Ovary (tissue), 10 donors: ENCODE measurements at regions of chr6 and their contacts with region 1.

Region 1: GRCh38 chr6:17656092-17656491 is 50.6 kb downstream of the NUP153 start:
- DNase-seq: no peak
- H3K4me3 ChIP-seq: no peak overlapping the region
- H3K27ac ChIP-seq: no peak overlapping the region
- H3K4me1 ChIP-seq: no peaks in the 10 kb centered on the region
- H3K27me3 ChIP-seq: no peaks in the 10 kb centered on the region
- CTCF ChIP-seq: no peak
- EP300 ChIP-seq: no peak
- POLR2A ChIP-seq: no peak

Region 2: GRCh38 chr6:17640477-17640917 is 15.6 kb before region 1 on chr6:
- intact Hi-C with region 1: loop called in 1 of 4 experiments (anchors 1 kb)
- DNase-seq: no peak
- H3K4me3 ChIP-seq: no peak overlapping the region
- H3K27ac ChIP-seq: no peak overlapping the region
- H3K4me1 ChIP-seq: no peaks in the 10 kb centered on the region
- H3K27me3 ChIP-seq: no peaks in the 10 kb centered on the region
- CTCF ChIP-seq: no peak
- EP300 ChIP-seq: no peak
- POLR2A ChIP-seq: no peak

Region 3: GRCh38 chr6:17987576-17988421 is 331.7 kb after region 1 on chr6 and contains the start of gene KIF13A:
- intact Hi-C with region 1: no loop called
- DNase-seq: peak; percentile 66 to 82 (median 75)
- H3K4me3 ChIP-seq: peak within 1 kb of the TSS; percentile 89
- H3K27ac ChIP-seq: peak within 1 kb of the TSS; percentile 94 to 96
- H3K4me1 ChIP-seq: peaks cover 2% of the 10 kb centered on the region
- H3K27me3 ChIP-seq: no peaks in the 10 kb centered on the region
- CTCF ChIP-seq: peak in 2 of 3 donors; percentile 41 to 48
- EP300 ChIP-seq: no peak
- POLR2A ChIP-seq: peak; percentile 11
- total RNA-seq, gene KIF13A: 19.6 to 44.4 (median 38.3) TPM